Posterior vena cava (tissue), 2 donors: ENCODE measurements at regions of chr2 and their contacts with region 1.

Region 1: DNA sequence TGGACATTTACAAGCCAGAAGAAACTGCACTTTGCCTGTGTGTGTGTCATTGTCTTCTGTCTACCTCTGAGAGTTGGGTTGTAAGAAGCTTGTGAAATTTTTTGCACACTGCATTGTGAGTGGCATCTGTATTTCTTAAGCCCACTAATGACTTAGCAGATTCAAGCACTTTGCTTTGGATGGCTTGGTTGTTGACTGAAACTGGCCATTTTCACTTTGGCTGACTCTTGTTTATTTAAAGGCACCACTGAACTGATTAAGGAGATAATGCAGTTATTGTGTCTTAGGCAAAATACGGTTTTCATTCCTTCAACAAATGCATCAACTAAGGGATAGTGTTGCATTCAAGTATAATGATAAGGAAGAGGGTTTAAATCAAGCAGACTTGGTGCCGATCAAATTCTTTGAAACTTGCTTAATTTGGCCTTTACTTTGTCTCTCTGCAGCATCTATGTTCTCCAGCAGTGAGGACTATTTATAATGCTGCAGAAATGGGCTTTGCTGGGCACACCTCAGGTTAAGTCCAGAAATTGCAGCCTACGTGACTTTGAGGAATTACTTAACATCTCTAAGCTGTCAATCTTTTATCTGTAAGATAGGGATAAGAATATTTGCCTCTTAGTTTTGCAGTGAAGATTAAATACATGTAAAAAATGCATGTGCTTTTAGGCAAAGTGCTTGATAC is 142.0 kb downstream of the CCDC85A start:
- DNase-seq: no peak

Region 2: DNA sequence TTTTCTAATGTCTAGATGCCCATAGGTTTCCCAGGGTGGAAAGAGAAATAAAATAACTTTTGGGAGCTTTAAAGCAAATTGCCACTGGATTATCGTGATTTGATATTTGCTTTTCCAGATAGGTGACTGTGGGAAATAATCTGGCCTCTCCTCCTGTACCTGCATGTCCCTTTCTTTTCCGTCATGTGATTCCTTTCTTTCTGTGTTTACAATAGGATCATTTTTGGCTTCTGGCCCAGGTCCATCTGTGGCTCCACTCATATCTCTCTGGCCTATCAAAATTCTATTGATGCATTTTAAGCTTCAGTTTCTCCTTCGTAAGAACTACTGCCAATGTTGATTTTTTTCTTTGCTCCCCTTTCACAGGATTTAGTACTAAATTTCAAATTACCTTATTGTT is 11.5 kb after region 1 on chr2:
- intact Hi-C with region 1: loop called in 1 of 2 experiments (anchors 1 kb)
- DNase-seq: no peak

Region 3: DNA sequence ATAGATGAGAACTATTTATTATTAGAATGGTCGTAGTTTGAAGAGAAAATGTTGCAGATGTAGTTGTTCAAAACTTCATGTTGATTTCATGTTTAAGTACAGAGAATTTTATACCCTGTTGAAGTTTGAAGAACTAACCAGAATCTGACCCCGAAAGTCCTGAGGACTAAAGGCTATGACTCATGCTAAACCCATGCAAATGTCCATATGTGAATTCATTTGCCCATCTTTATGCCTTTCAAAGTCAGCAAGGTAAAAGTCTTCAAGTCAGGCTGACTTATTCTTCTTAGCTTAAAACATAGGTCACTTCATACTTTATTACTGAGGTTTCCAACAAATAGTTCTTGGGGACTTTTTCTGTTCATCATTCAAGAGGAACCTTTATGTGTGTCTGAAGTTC is 43.5 kb after region 1 on chr2:
- intact Hi-C with region 1: no loop called
- DNase-seq: no peak